ENCODE measurements at regions of chr5 and their contacts with region 1.

Region 1: GRCh38 chr5:131382407-131383395 is 118.8 kb downstream of the CDC42SE2 start:
- DNase-seq: peak; percentile 76
- ATAC-seq: peak; percentile 79
- H3K4me3 Mint-ChIP-seq: peak overlapping the region; percentile 63
- H3K27ac Mint-ChIP-seq: peak overlapping the region; percentile 91
- H3K4me1 Mint-ChIP-seq: peaks cover 87% of the 10 kb centered on the region
- H3K27me3 Mint-ChIP-seq: no peaks in the 10 kb centered on the region

Region 2: DNA sequence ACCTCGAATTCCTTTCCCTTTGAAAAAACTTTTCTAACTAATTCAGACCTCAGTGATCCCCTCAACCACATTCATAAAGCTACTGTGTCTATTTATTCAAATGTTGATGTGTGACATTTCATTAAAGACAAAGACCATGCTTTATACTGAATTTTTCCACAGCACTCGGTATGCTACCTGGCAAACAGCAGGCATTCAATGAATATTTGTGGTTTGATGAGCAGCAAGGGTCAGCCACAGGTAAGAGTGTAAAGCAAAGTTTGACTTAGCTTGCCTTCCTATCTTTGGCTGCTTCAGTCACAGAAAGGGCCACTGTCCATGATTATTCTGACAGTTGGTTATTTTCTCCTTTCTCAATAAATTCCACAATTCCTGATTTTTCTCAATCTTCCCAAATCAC is 124.0 kb before region 1 on chr5:
- CTCF ChIA-PET with region 1: interaction called, 16 read pairs
- DNase-seq: no peak
- ATAC-seq: no peak
- H3K4me3 Mint-ChIP-seq: peak overlapping the region; percentile 73
- H3K27ac Mint-ChIP-seq: peak overlapping the region; percentile 91
- H3K4me1 Mint-ChIP-seq: peaks cover 62% of the 10 kb centered on the region
- H3K27me3 Mint-ChIP-seq: no peaks in the 10 kb centered on the region

Region 3: DNA sequence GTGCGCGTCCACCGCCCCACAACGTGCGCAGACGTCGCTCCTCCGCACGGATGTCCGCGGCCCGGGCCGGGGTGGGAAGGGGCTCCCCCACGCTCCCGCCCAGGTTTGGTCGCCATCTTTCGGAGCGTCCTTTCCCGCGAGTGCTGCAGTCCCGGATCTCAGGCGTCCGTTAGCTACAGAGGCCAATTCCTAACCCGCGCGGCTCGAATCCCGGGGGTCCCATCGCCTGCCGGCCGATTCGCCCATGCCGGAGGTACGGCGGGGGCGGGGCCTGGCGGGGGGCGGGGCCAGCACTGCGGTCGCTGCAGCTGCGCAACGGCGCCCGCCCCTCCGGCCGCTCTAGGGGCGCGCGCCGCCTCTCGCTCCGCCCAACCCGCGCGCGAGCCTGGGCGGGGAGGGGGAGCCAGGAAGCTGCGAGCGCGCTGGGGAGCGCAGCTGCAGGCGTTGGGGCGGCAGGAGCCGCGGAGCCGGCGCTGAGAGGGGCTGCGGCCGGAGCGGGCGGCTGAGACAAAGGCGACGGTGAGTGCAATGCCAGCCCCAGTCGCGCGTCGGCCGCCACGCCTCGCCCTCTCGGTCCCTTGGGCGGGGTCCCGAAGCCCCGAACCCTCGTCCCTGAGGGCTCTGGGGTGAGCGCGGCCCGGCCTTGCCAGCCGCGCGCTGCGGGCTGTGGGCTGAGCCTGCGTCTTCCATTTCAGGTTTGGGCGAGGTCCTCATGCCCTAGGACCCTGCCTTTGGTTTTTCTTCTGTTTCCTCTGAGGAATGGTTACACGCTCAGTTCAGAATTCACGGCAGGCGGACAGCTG is 118.9 kb before region 1 on chr5 and contains the start of gene CDC42SE2:
- CTCF ChIA-PET with region 1: interaction called, 16 read pairs
- DNase-seq: peak; percentile 89
- ATAC-seq: peak; percentile 87
- H3K4me3 Mint-ChIP-seq: peak within 1 kb of the TSS; percentile 83
- H3K27ac Mint-ChIP-seq: peak within 1 kb of the TSS; percentile 89
- H3K4me1 Mint-ChIP-seq: peaks cover 46% of the 10 kb centered on the region
- H3K27me3 Mint-ChIP-seq: no peaks in the 10 kb centered on the region
- total RNA-seq, gene CDC42SE2: 118 to 149 TPM

Region 4: DNA sequence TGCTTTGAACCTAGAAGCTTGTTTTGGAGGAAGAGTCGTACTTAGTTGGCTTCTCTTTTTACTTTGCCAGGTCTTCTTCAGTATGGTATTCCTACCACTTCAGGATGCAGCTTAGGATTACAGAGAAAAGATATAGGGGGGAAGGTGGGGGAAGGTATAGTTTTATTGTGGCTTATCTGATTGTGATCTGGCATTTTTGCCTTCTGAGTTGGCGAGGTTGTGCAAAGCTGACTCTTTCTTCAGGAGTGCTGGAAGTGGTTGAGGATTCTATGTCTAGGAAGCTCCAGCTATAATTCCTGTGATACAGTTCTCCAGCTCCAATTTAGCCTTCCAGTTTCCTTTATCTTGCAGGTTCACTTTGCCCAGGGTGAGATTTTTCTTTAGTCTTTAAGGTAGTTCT is 111.9 kb before region 1 on chr5:
- CTCF ChIA-PET with region 1: interaction called, 14 read pairs
- DNase-seq: no peak
- ATAC-seq: no peak
- H3K4me3 Mint-ChIP-seq: peak overlapping the region; percentile 83
- H3K27ac Mint-ChIP-seq: peak overlapping the region; percentile 92
- H3K4me1 Mint-ChIP-seq: peaks cover 64% of the 10 kb centered on the region
- H3K27me3 Mint-ChIP-seq: no peaks in the 10 kb centered on the region

Region 5: DNA sequence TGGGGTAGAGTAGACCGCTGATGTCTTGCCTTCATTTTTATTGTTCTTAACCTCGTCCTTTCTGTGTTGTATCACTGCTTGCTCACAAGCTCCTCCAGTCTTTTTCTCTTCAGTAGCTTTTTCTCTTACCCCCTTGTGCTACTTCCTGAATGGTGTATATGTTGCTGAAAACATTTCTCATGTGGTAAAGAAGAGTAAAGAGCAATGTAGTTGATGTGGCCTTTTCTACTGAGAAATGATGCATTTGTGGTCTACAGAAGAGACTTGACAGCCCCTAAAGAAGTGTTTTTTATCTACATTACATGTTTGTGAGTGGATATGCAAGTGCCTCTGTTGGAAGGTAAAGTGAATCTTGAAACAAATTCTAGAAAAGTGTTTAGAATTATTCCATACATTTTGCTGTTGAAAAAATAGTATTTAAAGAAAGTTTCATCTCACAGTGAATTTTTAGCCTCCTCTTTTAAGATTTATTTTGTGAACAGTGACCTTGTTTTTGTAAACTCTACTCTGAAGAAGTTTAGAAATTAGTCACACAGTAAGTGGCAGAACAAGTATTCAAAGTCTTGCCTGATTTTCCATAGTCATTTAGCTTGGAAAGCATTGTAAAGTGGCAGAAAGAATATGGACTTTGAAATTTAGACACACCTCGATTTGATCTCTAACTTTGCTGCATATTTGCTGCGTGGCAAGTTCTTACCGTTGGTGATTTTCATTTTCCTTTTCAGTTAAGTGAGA is 101.4 kb before region 1 on chr5:
- CTCF ChIA-PET with region 1: interaction called, 11 read pairs
- DNase-seq: no peak
- ATAC-seq: peak; percentile 75
- H3K4me3 Mint-ChIP-seq: peak overlapping the region; percentile 77
- H3K27ac Mint-ChIP-seq: peak overlapping the region; percentile 92
- H3K4me1 Mint-ChIP-seq: peaks cover 85% of the 10 kb centered on the region
- H3K27me3 Mint-ChIP-seq: no peaks in the 10 kb centered on the region

Region 6: GRCh38 chr5:131488463-131488862 is 105.8 kb after region 1 on chr5:
- CTCF ChIA-PET with region 1: no interaction called
- DNase-seq: no peak
- ATAC-seq: peak; percentile 61
- H3K4me3 Mint-ChIP-seq: no peak overlapping the region
- H3K27ac Mint-ChIP-seq: peak overlapping the region; percentile 46
- H3K4me1 Mint-ChIP-seq: peaks cover 13% of the 10 kb centered on the region
- H3K27me3 Mint-ChIP-seq: no peaks in the 10 kb centered on the region

Region 7: DNA sequence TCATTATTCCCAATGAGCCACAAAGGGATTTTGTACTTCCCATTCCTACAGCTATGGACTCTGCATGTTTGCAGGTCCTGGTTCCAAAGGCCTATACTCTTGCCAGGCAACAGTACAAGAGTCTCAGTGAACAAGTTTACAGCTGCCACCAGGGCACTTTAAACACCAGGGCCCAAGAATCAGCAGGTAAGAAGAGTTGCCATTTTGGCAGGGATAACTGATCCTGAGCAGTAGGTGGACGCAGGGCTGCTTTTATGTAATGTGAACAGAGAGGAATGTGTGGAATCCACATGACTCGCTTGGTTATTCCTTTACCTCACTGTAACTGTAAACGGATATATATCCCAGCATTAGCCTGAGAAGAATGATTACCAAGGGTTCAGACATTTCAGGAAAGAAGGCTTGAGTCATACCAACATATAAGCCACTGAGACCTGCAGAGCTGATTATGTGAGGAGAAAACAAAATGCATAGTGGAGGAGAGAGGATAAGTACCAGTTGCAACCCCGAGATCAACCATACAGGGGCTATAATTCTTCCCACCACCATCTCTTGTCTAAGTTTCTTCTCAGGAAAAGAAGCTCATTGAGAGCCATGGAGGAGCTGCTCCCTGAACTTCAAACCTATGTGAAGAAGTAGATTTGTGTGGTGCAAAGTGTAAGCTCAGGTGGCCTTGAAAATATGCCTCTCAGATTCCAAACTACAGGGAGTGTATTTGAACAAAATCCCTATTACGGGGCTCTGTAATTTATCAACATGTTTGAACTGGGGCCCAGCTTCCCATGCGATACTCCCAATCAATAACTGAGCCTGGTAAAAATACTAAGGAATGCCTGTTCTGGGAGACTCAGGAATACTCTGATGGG is 227.7 kb after region 1 on chr5:
- CTCF ChIA-PET with region 1: no interaction called
- DNase-seq: no peak
- ATAC-seq: no peak
- H3K4me3 Mint-ChIP-seq: no peak overlapping the region
- H3K27ac Mint-ChIP-seq: no peak overlapping the region
- H3K4me1 Mint-ChIP-seq: peaks cover 18% of the 10 kb centered on the region
- H3K27me3 Mint-ChIP-seq: no peaks in the 10 kb centered on the region

Measured in activated CD8-positive, alpha-beta memory T cell treated with anti-CD3 and anti-CD28 coated beads, Interleukin-2, amount 10 ng/mL, durations not matched to agents 7 days and 5 days (primary cell).